GM13976 (cell line): ENCODE measurements at regions of chr4 and their contacts with region 1.

Region 1: DNA sequence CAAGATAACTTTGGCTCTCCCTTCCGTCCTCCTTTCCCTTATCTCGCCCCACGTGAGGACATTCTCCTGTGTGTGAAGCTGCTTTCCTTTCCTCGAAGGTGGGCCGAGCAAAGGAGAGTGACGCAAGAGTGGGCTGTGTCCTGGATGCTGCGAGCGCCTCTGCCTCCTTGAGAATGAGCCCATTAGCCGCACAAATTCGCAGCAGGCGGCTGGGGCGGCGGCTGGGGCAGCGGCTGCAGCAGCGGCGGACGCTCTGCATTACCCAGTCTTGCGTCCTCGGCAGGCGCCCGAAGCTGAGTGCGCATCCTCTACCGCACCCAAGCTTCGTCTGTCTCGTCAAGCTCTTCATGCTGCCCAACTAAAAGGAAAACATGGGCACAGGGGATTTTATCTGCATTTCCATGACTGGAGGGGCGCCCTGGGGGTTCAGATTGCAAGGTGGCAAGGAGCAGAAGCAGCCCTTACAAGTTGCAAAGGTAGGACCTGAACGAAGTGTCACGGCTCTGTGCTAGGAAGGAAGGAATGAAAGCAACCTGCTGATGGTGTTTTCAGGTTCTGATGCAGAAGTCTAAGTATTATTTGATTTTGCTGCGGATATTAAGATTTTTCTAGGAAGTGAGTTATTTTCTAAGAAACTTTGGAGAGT is at the start of gene SYNPO2:
- DNase-seq: peak; percentile 49
- CTCF ChIP-seq: no peak

Region 2: DNA sequence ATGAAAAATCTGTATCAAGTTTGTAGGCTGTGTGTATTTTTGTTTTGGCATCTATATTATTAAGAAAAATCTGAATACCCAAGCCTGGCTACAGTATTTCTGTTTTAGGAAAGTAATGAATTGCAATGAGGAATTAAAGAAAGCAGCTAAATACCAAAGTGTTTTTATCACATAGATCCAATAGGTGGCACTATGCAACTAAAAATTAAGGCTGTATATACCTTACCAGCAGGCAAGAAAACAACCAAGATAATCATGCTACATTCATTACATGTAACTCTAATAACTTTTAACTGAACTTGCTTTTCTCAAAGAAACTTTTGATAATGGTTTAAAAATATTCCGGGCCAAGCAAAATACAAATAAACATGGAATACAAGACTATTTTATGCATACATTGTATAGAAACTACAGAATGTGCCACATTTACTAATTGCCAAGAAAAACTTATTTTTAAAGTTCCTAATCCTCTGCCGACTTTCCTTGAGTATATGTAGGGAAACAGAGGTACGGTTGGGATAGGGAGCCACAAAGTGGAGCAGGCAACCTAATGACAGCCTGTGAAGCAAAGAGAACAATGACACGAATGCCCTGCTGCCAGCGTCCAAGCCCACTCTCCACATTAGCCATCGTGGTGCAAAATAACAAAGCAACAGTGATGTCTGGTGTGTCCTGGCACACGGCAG is 116.6 kb before region 1 on chr4:
- in situ Hi-C with region 1: loop called (anchors 10 kb)
- DNase-seq: peak; percentile 33
- CTCF ChIP-seq: peak; percentile 28